IMR-90 (cell line): ENCODE measurements at regions of chrX and their contacts with region 1.

Region 1: DNA sequence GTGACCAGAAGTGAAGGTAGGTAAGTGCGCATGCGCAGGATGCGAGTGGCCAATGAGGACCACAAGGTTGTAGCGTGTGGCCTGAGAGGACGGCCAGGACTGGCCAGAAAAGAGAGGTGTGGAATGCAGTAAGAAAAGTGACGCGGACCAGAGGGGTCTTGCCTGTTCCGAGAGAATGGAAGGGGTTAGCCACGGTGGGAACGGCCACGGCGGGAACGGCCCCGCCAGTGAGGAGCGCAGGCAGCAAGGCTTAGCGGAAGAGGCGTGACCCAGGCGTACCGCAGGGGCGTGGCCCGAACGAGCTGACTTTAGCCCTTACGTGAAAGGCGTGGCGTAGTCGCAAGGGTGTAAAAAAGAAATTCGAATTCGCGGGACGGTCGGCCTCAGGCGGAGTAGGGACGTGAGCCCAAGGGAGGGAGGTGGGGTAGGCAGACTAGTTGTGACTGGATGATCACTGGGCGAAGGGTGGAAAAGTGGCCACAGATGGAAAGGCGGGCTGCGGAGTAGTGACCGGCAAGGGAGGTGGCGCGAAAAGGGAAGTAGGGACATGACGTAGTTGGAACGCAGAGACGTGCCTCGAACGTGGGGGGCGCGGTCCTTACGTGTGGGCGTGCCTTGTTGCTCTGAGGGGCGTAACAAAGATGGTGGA is 10.4 kb upstream of the CLTRN start:
- DNase-seq: peak; percentile 96
- ATAC-seq: peak; percentile 93
- H3K4me3 ChIP-seq: peak overlapping the region; percentile 74
- H3K27ac ChIP-seq: peak overlapping the region; percentile 95
- H3K4me1 ChIP-seq: 0 out of 2 replicates have a peak, but pooled peaks cover 1% of the 10 kb centered on the region
- H3K27me3 ChIP-seq: no peaks in the 10 kb centered on the region
- CTCF ChIP-seq: no peak
- POLR2A ChIP-seq: peak; percentile 86
- RAD21 ChIP-seq: no peak

Region 2: GRCh38 chrX:15349046-15349445 is 325.9 kb before region 1 on chrX:
- CTCF ChIA-PET with region 1: no interaction called
- POLR2A ChIA-PET with region 1: no interaction called
- dilution Hi-C with region 1: no loop called
- in situ Hi-C with region 1: no loop called
- intact Hi-C with region 1: loop called (anchors 10 kb)
- DNase-seq: peak; percentile 73
- ATAC-seq: peak; percentile 90
- H3K4me3 ChIP-seq: no peak overlapping the region
- H3K27ac ChIP-seq: no peak overlapping the region
- H3K4me1 ChIP-seq: no peaks in the 10 kb centered on the region
- H3K27me3 ChIP-seq: peaks cover 4% of the 10 kb centered on the region; the same call in 1 of the 2 replicates
- CTCF ChIP-seq: peak; percentile 66
- POLR2A ChIP-seq: no peak
- RAD21 ChIP-seq: peak; percentile 77

Region 3: GRCh38 chrX:15493118-15493962 is 181.6 kb before region 1 on chrX and contains the start of gene PIR:
- CTCF ChIA-PET with region 1: no interaction called
- POLR2A ChIA-PET with region 1: no interaction called
- dilution Hi-C with region 1: no loop called
- in situ Hi-C with region 1: no loop called
- intact Hi-C with region 1: loop called (anchors 10 kb)
- DNase-seq: peak; percentile 80
- ATAC-seq: peak; percentile 99
- H3K4me3 ChIP-seq: peak within 1 kb of the TSS; percentile 60
- H3K27ac ChIP-seq: peak within 1 kb of the TSS; percentile 63; the same call in 1 of the 2 replicates
- H3K4me1 ChIP-seq: no peaks in the 10 kb centered on the region
- H3K27me3 ChIP-seq: no peaks in the 10 kb centered on the region
- CTCF ChIP-seq: 0 out of 2 replicates have a peak, but pooled peaks have one; percentile 27
- POLR2A ChIP-seq: no peak; the same call in 1 of the 2 replicates
- RAD21 ChIP-seq: no peak
- total RNA-seq, gene PIR: 5.7 and 5.8 TPM in 2 replicates

Region 4: GRCh38 chrX:15854712-15855567 is 180.0 kb after region 1 on chrX and contains the start of gene AP1S2:
- CTCF ChIA-PET with region 1: no interaction called
- POLR2A ChIA-PET with region 1: no interaction called
- dilution Hi-C with region 1: no loop called
- in situ Hi-C with region 1: no loop called
- intact Hi-C with region 1: loop called (anchors 10 kb)
- DNase-seq: peak; percentile 92
- ATAC-seq: peak; percentile 99
- H3K4me3 ChIP-seq: peak within 1 kb of the TSS; percentile 60
- H3K27ac ChIP-seq: peak within 1 kb of the TSS; percentile 32
- H3K4me1 ChIP-seq: no peaks in the 10 kb centered on the region
- H3K27me3 ChIP-seq: peaks cover 4% of the 10 kb centered on the region; the same call in 1 of the 2 replicates
- CTCF ChIP-seq: no peak
- POLR2A ChIP-seq: no peak
- RAD21 ChIP-seq: no peak
- total RNA-seq, gene AP1S2: 28.3 and 117 TPM in 2 replicates